Heart left ventricle (tissue), 16 donors: ENCODE measurements at regions of chr5 and their contacts with region 1.

Region 1: DNA sequence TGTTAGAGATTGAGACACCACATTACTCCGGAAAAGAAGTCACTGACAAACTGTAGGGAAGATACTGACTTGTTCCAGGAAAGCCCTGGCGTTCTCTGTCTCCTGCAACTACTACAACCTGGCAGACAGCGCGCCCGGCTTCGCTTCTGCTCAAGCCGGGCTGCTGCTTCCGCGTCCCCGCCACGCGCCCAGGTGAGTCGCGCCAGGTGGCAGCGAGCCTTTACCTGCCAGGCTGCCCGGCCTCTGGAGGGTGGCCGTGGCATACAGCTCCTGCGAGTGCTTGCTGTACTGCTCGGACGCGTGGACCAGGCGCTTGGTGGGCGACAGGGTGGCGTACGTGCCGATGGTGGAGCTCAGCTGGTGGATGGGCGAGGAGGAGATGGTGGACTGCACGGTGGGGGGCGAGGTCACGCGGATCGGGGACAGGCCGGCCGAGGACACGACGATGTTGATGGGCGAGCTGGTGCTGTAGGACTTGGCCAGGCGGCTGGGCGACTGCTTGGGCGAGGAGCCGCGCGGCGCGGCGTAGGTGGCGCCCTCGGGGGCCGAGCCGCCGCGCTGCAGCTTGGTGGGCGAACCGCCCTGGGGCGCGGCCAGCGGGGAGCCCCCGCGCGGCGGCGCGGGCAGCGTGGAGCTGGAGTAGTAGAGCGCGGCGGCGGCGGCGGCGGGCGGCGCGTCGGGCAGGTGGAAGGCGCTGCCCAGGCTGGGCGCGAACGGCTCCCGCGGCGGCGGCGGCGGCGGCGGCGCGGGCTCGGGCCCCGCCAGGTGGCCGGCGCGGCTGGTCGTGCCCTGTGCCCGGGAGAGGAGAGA is 519.6 kb downstream of the CTNND2 start:
- DNase-seq: no peak
- ATAC-seq: peak in 3 of 4 donors; percentile 37 to 68 (median 64)
- H3K4me3 ChIP-seq: peak overlapping the region in 11 of 12 donors; percentile 10 to 56 (median 37)
- H3K27ac ChIP-seq: no peak overlapping the region
- H3K4me1 ChIP-seq: peaks cover 0 to 9% (median 0%) of the 10 kb centered on the region in 12 donors
- H3K27me3 ChIP-seq: peaks cover 0 to 33% (median 5%) of the 10 kb centered on the region in 9 donors
- CTCF ChIP-seq: peak in 1 of 12 donors; percentile 6
- POLR2A ChIP-seq: no peak

Region 2: GRCh38 chr5:10262121-10262774 is 1122.4 kb before region 1 on chr5:
- intact Hi-C with region 1: no loop called
- DNase-seq: no peak
- ATAC-seq: peak in 1 of 4 donors; percentile 36
- H3K4me3 ChIP-seq: no peak overlapping the region
- H3K27ac ChIP-seq: no peak overlapping the region
- H3K4me1 ChIP-seq: peaks cover 0 to 6% (median 0%) of the 10 kb centered on the region in 12 donors
- H3K27me3 ChIP-seq: no peaks in the 10 kb centered on the region
- CTCF ChIP-seq: no peak
- POLR2A ChIP-seq: no peak

Region 3: GRCh38 chr5:11166923-11167322 is 217.7 kb before region 1 on chr5:
- intact Hi-C with region 1: loop called in 1 of 10 experiments (anchors 10 kb)
- DNase-seq: no peak
- ATAC-seq: no peak
- H3K4me3 ChIP-seq: no peak overlapping the region
- H3K27ac ChIP-seq: no peak overlapping the region
- H3K4me1 ChIP-seq: peaks cover 0 to 5% (median 0%) of the 10 kb centered on the region in 12 donors
- H3K27me3 ChIP-seq: no peaks in the 10 kb centered on the region
- CTCF ChIP-seq: no peak
- POLR2A ChIP-seq: no peak

Region 4: DNA sequence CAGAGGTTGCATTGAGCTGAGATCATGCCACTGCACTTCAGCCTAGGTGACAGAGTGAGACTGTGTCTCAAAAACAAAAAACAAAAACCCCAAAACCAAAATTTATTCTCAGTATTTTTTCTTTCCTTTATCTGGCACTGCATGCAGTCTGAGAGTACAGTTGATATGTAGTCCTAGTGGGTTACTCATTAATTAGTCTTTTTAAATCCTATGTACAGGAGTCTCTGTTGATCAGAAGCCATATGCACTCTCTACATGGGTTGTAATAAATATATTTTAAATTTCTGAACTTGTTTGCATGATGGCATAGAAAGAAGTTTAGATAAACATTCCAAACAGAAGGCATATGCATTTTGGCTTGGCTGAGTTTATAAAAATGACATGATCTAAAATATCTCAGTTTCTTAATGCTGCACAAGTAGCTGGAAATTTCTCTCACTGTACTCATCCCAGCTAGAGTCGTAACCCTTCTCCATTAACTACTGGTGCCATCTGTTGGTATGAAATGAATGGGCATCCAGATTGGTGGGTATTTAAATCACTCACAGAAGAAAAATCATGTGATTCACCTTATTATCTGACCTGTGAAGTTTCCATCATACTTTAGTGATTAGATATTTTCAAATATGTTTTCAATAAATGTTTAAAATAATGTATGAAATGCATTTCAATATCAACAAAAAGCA is 234.8 kb after region 1 on chr5:
- intact Hi-C with region 1: loop called in 2 of 10 experiments (anchors 10 kb)
- DNase-seq: no peak
- ATAC-seq: peak in 3 of 4 donors; percentile 50 to 79 (median 65)
- H3K4me3 ChIP-seq: no peak overlapping the region
- H3K27ac ChIP-seq: no peak overlapping the region
- H3K4me1 ChIP-seq: peaks cover 0 to 5% (median 0%) of the 10 kb centered on the region in 12 donors
- H3K27me3 ChIP-seq: no peaks in the 10 kb centered on the region
- CTCF ChIP-seq: peak in 10 of 12 donors; percentile 13 to 54 (median 40)
- POLR2A ChIP-seq: no peak